ENCODE measurements at regions of chr16 and their contacts with region 1.

Region 1: GRCh38 chr16:19375561-19376158 is 42.0 kb upstream of the TMC5 start:
- DNase-seq: peak; percentile 77
- H3K4me3 Mint-ChIP-seq: no peak overlapping the region
- H3K27ac Mint-ChIP-seq: no peak overlapping the region
- H3K4me1 Mint-ChIP-seq: peaks cover 11% of the 10 kb centered on the region
- H3K27me3 Mint-ChIP-seq: no peaks in the 10 kb centered on the region

Region 2: GRCh38 chr16:19223235-19224170 is 152.2 kb before region 1 on chr16:
- intact Hi-C with region 1: loop called (anchors 2 kb)
- DNase-seq: peak; percentile 78
- H3K4me3 Mint-ChIP-seq: no peak overlapping the region
- H3K27ac Mint-ChIP-seq: no peak overlapping the region
- H3K4me1 Mint-ChIP-seq: no peaks in the 10 kb centered on the region
- H3K27me3 Mint-ChIP-seq: peaks cover 3% of the 10 kb centered on the region